AG04450 (cell line): ENCODE measurements at regions of chr2 and their contacts with region 1.

Region 1: DNA sequence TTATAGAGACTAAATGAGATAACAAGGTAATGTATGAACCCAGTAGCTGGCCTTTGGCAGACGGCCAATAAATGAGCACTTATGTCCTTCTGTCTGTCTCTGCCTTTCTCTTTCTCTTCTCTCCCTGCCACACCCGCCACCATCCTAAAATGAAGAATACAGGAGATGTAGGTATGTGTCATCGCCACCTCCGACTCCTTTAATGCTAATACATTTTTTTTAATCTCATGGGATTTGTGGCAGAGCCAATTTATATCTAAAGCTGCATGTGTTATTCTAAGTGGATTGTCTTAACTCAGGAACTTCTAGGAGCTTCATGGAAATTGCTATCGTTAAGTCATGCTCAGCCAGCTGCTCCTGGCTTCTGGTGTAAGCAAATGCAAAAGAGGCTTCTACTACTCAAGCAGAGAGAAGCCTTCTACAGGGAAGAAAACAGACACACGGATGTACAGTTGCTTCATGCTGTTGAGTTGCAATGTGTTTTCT is 2.2 kb downstream of the TM4SF20 start:
- DNase-seq: peak; percentile 23
- H3K4me3 ChIP-seq: no peak overlapping the region
- H3K27ac ChIP-seq: no peak overlapping the region
- H3K27me3 ChIP-seq: no peaks in the 10 kb centered on the region
- CTCF ChIP-seq: no peak

Region 2: GRCh38 chr2:227308784-227309183 is 68.2 kb before region 1 on chr2:
- CTCF ChIA-PET with region 1: no interaction called
- POLR2A ChIA-PET with region 1: no interaction called
- DNase-seq: no peak
- H3K4me3 ChIP-seq: no peak overlapping the region
- H3K27ac ChIP-seq: no peak overlapping the region
- H3K27me3 ChIP-seq: no peaks in the 10 kb centered on the region
- CTCF ChIP-seq: no peak

Region 3: DNA sequence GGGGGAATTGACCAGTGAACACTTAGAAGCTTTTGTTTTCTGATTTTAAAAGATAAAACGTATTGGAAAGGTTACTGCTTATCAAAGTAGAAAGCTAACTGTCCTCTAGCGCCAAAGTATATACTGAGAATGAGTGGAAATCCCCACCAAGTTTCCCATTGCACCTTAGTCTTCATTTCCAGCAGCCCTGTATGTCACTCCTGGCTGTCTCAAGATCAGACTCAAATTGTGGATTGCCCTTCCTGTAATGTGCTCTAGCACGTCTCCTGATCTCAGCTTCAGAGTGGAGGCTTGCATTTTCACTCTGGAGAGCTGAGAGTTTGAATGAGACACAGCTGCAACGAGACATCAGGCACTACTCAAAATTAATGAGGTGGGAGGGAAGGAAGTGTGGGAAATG is 25.3 kb before region 1 on chr2:
- CTCF ChIA-PET with region 1: no interaction called
- POLR2A ChIA-PET with region 1: no interaction called
- DNase-seq: no peak
- H3K4me3 ChIP-seq: no peak overlapping the region
- H3K27ac ChIP-seq: no peak overlapping the region
- H3K27me3 ChIP-seq: no peaks in the 10 kb centered on the region
- CTCF ChIP-seq: no peak

Region 4: DNA sequence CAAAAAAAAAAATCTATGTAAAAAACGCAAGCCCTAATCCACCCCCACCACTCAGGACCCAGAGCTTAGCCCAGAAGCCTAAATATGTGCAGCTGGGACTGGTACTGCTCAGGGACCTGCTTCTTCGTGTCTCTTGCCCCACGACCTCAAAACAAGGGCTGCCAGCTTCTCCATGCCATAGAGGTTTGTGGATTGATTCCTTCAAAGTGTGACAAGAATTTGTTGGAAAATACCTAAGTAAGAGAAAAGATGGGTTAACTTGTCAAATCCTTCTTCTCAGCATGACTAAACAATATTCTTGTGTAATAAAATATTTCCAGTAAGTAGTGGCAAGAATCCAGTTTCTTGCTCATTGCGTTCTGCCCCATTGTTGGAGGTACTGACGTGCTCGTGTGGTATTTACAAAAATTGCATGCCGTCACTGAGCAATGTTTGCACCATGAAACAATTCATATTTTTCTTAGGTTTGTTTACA is 11.6 kb after region 1 on chr2:
- CTCF ChIA-PET with region 1: interaction called, 29 read pairs
- POLR2A ChIA-PET with region 1: interaction called, 16 read pairs
- DNase-seq: peak; percentile 98
- H3K4me3 ChIP-seq: no peak overlapping the region
- H3K27ac ChIP-seq: peak overlapping the region; percentile 96
- H3K27me3 ChIP-seq: no peaks in the 10 kb centered on the region
- CTCF ChIP-seq: no peak

Region 5: DNA sequence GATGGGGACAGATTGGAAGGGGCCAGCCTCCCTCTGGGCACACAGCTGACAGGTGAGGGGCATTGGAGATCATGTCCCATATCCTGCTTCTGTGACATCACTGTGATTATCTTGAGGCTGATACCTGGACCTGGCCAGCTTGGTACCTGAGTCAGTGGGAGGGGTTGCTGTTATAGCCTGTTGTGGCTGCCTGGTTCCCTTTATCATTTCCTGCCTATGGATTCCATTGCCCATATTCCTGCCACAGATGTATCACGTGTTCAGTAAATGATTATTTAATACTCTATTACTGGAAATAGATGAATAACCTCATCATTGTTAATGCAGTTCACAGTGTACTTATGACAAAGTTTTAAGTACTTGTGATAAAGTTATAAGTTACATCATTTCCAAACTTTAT is 18.6 kb after region 1 on chr2:
- CTCF ChIA-PET with region 1: interaction called, 29 read pairs
- POLR2A ChIA-PET with region 1: interaction called, 8 read pairs
- DNase-seq: no peak
- H3K4me3 ChIP-seq: no peak overlapping the region
- H3K27ac ChIP-seq: no peak overlapping the region
- H3K27me3 ChIP-seq: no peaks in the 10 kb centered on the region
- CTCF ChIP-seq: no peak

Region 6: DNA sequence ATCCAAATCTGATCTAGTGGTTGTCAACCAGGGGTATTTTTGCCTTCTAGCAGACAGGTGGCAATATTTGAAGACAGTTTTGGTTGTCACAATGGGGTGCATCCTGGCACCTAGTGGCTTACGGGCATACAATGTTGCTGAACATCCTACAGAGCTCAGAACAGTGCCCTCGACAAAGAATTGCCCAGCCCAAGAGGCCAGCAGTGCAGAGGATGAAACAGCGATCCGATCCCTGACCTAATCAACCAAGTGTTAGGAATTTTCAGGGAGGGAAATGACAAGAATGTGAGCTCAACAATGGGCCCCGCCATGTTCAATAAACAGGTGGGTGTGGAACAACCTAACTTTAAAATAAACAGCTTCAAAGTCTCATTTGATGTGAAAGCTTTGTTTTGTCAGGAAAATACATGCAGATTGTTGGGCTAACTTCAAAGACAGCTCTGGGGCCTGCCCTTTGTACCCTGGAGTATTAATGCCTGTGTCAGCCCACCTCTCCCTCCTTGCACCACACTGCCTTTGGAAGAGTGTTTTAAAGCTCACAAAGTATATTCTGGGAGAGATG is 267.1 kb after region 1 on chr2:
- CTCF ChIA-PET with region 1: no interaction called
- POLR2A ChIA-PET with region 1: no interaction called
- DNase-seq: no peak
- H3K4me3 ChIP-seq: no peak overlapping the region
- H3K27ac ChIP-seq: no peak overlapping the region
- H3K27me3 ChIP-seq: no peaks in the 10 kb centered on the region
- CTCF ChIP-seq: no peak